ENCODE measurements at regions of chr15 and their contacts with region 1.

Region 1: GRCh38 chr15:88610701-88611231 is 10.4 kb upstream of the AEN start:
- DNase-seq: no peak
- H3K4me3 Mint-ChIP-seq: no peak overlapping the region
- H3K27ac Mint-ChIP-seq: no peak overlapping the region
- H3K4me1 Mint-ChIP-seq: peaks cover 29% of the 10 kb centered on the region
- H3K27me3 Mint-ChIP-seq: peaks cover 63% of the 10 kb centered on the region
- CTCF ChIP-seq: no peak

Region 2: DNA sequence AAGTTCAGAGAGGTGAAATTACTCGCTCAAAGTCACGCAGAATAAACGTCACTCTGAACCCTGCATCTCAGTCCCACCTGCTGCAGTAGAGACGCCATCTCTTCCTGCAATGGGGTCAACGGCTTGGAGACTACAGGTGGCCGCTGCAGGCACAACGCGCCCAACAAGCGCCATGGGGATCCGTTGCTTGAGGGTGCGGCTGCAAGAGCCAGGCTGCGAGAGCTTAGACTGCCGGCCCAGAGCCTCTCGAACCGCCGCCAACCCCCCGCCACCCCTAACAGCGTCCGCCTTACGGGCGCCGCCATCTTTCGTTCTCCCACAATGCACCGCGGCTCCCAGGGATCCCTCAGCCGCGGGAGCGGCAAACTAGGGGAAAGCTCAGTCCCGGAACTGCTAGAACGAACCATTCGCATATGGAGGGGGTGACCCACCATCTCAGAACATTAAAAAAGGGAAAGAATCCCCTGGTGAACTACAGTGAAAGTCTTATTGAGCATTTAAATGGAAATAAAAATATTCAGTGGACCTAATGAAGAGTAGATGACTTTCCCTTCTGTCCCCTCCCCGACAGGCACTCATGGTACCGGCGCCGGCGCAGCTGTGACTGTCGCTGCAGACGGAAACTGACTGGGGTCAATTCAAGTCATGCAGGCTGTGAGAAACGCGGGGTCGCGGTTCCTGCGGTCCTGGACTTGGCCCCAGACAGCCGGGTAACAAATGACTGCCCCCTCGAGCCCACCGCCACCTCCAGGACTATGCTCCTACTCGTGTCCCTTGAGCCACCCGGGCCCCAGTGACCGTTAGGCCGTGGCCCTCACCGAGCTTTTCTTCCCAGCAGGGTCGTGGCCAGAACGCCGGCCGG is 143.5 kb before region 1 on chr15 and contains the starts of genes MRPL46 and MRPS11:
- CTCF ChIA-PET with region 1: interaction called, 10 read pairs
- intact Hi-C with region 1: loop called (anchors 2 kb)
- DNase-seq: peak; percentile 93
- H3K4me3 Mint-ChIP-seq: peak within 1 kb of the TSS; percentile 86
- H3K27ac Mint-ChIP-seq: peak within 1 kb of the TSS; percentile 93
- H3K4me1 Mint-ChIP-seq: peaks cover 12% of the 10 kb centered on the region
- H3K27me3 Mint-ChIP-seq: no peaks in the 10 kb centered on the region
- CTCF ChIP-seq: no peak
- total RNA-seq, gene MRPL46: 47.6 and 53.8 TPM in 2 replicates
- total RNA-seq, gene MRPS11: 66.6 and 75.6 TPM in 2 replicates

Region 3: GRCh38 chr15:88491158-88491557 is 119.6 kb before region 1 on chr15:
- CTCF ChIA-PET with region 1: no interaction called
- intact Hi-C with region 1: no loop called
- DNase-seq: no peak
- H3K4me3 Mint-ChIP-seq: no peak overlapping the region
- H3K27ac Mint-ChIP-seq: no peak overlapping the region
- H3K4me1 Mint-ChIP-seq: no peaks in the 10 kb centered on the region
- H3K27me3 Mint-ChIP-seq: no peaks in the 10 kb centered on the region
- CTCF ChIP-seq: no peak

Region 4: DNA sequence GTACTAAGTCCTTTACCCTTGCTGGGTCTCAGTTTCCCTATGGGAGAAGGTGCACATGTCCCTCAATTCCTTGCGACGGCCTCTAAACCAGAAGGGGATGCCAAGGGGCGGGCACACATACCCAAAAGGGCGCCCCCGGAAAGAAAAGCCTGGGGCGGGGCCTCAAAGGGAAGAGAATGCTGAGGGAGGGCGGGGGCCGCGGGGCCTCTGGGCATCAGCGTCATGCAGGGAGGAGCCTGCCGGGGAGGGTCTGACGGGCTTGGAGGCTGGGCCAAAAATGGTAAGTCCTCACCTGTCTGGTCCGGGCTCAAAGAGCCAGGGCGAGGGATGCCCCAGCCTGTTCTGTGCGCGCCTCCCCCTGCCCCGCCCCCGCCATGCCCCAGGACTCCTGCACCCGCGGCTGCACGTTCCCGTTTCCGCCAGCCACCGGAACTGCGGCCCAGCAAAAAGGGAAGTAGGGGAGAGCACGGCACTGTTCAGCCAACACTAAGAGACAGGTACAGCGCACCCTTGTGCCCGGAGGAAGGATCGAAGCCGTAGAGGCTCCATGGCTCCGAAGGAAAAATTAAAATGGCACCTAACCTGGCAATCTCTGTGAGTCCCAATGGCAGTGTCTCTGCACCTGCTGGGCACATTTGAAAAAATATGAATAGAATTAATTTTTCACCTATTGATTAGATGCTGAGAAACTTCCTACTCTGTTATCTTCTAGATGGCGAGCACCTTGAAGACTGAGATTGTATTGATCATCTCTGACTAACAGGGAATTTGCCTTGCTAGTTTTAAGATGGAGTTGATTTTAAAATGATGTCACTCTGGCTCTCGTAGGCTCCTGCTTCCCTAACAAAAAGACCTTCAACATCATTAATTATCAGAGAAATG is 64.3 kb before region 1 on chr15 and contains the start of gene DET1:
- CTCF ChIA-PET with region 1: no interaction called
- intact Hi-C with region 1: loop called (anchors 5 kb)
- DNase-seq: peak; percentile 97
- H3K4me3 Mint-ChIP-seq: peak within 1 kb of the TSS; percentile 74
- H3K27ac Mint-ChIP-seq: peak within 1 kb of the TSS; percentile 60
- H3K4me1 Mint-ChIP-seq: no peaks in the 10 kb centered on the region
- H3K27me3 Mint-ChIP-seq: no peaks in the 10 kb centered on the region
- CTCF ChIP-seq: peak; percentile 73
- total RNA-seq, gene DET1: 4.2 and 4.9 TPM in 2 replicates

Measured in Calu3 (cell line).